CD4-positive, alpha-beta memory T cell (primary cell): ENCODE measurements at regions of chr11 and their contacts with region 1.

Region 1: DNA sequence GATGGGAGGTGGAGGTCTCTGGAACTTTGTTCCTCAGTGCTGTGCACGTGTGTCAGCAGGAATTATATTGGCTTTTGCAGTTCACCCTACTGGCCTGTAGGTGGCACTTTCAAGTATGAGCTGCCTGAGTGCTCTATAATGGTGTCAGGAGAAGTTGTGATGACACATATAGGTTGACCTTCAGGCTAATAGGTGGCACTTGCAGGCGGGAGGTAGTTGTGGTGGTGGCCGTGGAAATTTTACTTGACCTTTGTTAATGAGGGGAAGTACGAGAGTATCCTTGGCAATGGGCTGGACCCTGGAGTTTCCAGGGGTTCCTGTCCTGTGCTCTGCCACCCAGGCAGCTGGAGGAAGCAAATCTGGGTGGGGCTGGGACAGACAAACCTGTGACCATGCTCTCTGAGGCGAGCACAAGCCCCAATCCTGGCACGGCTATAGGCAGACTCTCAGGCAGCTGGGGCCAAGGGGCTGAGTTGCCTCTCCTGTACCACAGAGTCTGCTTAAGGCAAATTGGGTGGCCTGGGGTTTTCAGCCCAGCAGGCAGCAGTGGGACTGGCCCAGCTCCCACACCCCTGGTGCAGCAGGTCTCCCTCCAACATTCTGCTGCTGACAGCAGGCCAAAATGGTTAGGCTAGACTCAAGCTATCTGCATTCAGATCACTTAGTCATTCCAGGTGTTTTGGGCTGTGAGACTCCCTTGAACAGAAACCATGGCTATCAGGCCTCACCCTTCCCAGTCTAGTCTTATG is 147.5 kb upstream of the CTSC start:
- DNase-seq: peak in 4 of 5 donors; percentile 21 to 33 (median 25)
- H3K4me3 ChIP-seq: no peak overlapping the region
- H3K4me3 Mint-ChIP-seq: no peak overlapping the region
- H3K27ac ChIP-seq: no peak overlapping the region
- H3K27ac Mint-ChIP-seq: peak overlapping the region in 1 of 7 donors; percentile 26
- H3K4me1 ChIP-seq: peaks cover 2% of the 10 kb centered on the region
- H3K4me1 Mint-ChIP-seq: peaks cover 0 to 6% (median 4%) of the 10 kb centered on the region in 4 donors
- H3K27me3 ChIP-seq: no peaks in the 10 kb centered on the region
- H3K27me3 Mint-ChIP-seq: peaks cover 0 to 6% of the 10 kb centered on the region in 2 donors

Region 2: DNA sequence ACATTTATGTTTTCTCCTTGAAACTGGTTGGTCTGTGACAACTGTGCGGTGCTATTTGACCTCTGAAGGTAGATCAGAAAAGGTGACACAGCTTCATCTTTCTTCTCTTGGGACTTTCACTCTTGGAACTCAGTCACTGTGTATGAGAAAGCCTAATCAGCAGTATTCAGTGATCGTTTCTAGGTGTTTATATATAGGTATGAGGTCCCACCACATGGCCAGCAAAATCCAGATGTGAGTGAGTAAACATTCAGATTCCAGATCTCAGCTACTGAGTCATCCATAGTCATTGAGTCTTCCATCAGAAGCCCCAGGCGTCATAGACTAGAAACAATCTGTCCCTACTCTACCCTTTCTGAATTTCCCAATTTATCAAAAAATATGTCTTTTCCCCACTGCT is 30.2 kb before region 1 on chr11:
- CTCF ChIA-PET with region 1: no interaction called
- POLR2A ChIA-PET with region 1: no interaction called
- intact Hi-C with region 1: no loop called
- DNase-seq: no peak
- H3K4me3 ChIP-seq: no peak overlapping the region
- H3K4me3 Mint-ChIP-seq: no peak overlapping the region
- H3K27ac ChIP-seq: no peak overlapping the region
- H3K27ac Mint-ChIP-seq: no peak overlapping the region
- H3K4me1 ChIP-seq: no peaks in the 10 kb centered on the region
- H3K4me1 Mint-ChIP-seq: peaks cover 0 to 5% (median under 1%) of the 10 kb centered on the region in 4 donors
- H3K27me3 ChIP-seq: no peaks in the 10 kb centered on the region
- H3K27me3 Mint-ChIP-seq: no peaks in the 10 kb centered on the region

Region 3: GRCh38 chr11:88495836-88496235 is 10.8 kb after region 1 on chr11:
- CTCF ChIA-PET with region 1: interaction called, 10 read pairs
- POLR2A ChIA-PET with region 1: interaction called, 3 read pairs
- intact Hi-C with region 1: no loop called
- DNase-seq: no peak
- H3K4me3 ChIP-seq: no peak overlapping the region
- H3K4me3 Mint-ChIP-seq: no peak overlapping the region
- H3K27ac ChIP-seq: no peak overlapping the region
- H3K27ac Mint-ChIP-seq: no peak overlapping the region
- H3K4me1 ChIP-seq: no peaks in the 10 kb centered on the region
- H3K4me1 Mint-ChIP-seq: no peaks in the 10 kb centered on the region
- H3K27me3 ChIP-seq: no peaks in the 10 kb centered on the region
- H3K27me3 Mint-ChIP-seq: no peaks in the 10 kb centered on the region